Head of caudate nucleus (tissue), 42 donors: ENCODE measurements at regions of chr1 and their contacts with region 1.

Region 1: DNA sequence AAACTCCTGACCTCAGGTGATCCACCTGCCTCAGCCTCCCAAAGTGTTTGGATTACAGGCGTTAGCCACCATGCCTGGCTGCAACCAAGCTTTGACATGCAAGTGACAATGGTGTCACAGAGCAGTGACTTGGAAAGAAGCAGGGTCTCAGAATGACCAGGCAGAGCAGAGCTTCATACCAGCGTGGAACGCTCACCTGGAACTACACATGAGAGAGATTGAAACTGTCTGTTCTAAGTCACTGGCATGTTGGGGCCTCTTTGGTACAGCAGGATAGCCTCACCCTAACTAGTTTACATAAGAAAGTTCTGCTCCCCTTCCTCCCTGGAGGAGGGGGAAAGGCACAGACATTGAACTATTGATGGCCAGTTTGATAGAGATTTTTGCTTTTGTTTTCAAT is 47.5 kb upstream of the ITPKB start:
- DNase-seq: no peak

Region 2: DNA sequence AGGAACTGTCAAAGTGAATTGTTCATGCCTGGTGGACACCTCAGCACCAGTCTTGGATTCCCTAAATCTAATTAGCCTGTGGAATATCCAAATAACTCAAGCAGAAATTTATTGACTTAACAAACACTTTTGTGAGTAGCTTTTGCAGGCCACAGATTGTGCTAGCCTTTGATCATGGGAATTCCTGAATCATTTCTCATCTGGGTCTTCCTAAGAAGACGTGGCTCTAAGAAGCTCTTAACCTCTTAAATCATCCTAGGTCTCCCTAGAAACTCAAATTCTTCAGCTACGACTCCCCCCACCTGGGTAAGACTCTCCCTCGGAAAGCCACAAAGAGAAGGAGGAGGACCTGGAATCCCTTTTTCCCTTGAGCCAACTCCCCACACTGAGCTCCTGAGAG is 30.0 kb after region 1 on chr1:
- intact Hi-C with region 1: no loop called
- DNase-seq: no peak

Region 3: GRCh38 chr1:226827968-226828513 is 41.5 kb after region 1 on chr1:
- intact Hi-C with region 1: loop called (anchors 5 kb)
- DNase-seq: peak; percentile 88 to 98 (median 95)